OCI-LY7 (cell line): ENCODE measurements at regions of chr19 and their contacts with region 1.

Region 1: GRCh38 chr19:1269065-1269477 is at the start of gene CIRBP:
- DNase-seq: peak; percentile 99
- H3K4me3 ChIP-seq: peak within 1 kb of the TSS; percentile 82
- H3K27ac ChIP-seq: peak within 1 kb of the TSS; percentile 69
- H3K4me1 ChIP-seq: peaks cover 85% of the 10 kb centered on the region
- CTCF ChIP-seq: no peak
- total RNA-seq, gene CIRBP: 278 and 287 TPM in 2 replicates

Region 2: DNA sequence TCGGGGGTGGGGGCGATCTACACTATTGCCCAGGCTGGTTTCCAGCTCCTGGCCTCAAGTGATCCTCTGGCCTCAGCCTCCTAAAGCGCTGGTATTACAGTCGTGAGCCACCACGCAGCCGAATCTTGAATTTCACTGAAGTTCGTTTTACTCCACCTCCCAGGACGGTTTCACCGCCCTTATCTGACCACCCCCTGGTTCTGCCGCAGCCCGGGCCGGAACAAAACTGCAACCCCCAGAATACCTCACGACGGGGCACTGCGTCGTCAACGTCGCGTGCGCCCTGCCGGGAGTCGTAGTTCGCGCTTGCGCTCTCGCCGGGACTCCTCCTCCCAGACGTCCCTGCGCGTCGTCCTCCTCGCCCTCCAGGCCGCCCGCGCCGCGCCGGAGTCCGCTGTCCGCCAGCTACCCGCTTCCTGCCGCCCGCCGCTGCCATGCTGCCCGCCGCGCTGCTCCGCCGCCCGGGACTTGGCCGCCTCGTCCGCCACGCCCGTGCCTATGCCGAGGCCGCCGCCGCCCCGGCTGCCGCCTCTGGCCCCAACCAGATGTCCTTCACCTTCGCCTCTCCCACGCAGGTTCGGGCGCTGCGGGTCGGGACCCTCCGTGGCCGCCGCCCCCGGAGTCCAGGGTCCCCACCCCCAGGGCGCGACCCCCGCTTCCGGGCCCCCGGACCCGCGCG is 27.5 kb before region 1 on chr19 and contains the start of gene ATP5F1D:
- CTCF ChIA-PET with region 1: interaction called, 24 read pairs
- POLR2A ChIA-PET with region 1: interaction called, 23 read pairs
- intact Hi-C with region 1: loop called (anchors 1 kb)
- DNase-seq: peak; percentile 96
- H3K4me3 ChIP-seq: peak within 1 kb of the TSS; percentile 89
- H3K27ac ChIP-seq: peak within 1 kb of the TSS; percentile 50
- H3K4me1 ChIP-seq: peaks cover 48% of the 10 kb centered on the region
- CTCF ChIP-seq: no peak
- total RNA-seq, gene ATP5F1D: 51.8 and 82.1 TPM in 2 replicates

Region 3: GRCh38 chr19:1249298-1249989 is 19.6 kb before region 1 on chr19:
- CTCF ChIA-PET with region 1: interaction called, 24 read pairs
- POLR2A ChIA-PET with region 1: interaction called, 23 read pairs
- intact Hi-C with region 1: loop called (anchors 1 kb)
- DNase-seq: peak; percentile 96
- H3K4me3 ChIP-seq: peak overlapping the region; percentile 97
- H3K27ac ChIP-seq: peak overlapping the region; percentile 87
- H3K4me1 ChIP-seq: peaks cover 46% of the 10 kb centered on the region
- CTCF ChIP-seq: no peak

Region 4: GRCh38 chr19:1295169-1296012 is 26.3 kb after region 1 on chr19:
- CTCF ChIA-PET with region 1: no interaction called
- POLR2A ChIA-PET with region 1: no interaction called
- intact Hi-C with region 1: no loop called
- DNase-seq: peak; percentile 48
- H3K4me3 ChIP-seq: no peak overlapping the region
- H3K27ac ChIP-seq: no peak overlapping the region
- H3K4me1 ChIP-seq: peaks cover 34% of the 10 kb centered on the region
- CTCF ChIP-seq: no peak

Region 5: DNA sequence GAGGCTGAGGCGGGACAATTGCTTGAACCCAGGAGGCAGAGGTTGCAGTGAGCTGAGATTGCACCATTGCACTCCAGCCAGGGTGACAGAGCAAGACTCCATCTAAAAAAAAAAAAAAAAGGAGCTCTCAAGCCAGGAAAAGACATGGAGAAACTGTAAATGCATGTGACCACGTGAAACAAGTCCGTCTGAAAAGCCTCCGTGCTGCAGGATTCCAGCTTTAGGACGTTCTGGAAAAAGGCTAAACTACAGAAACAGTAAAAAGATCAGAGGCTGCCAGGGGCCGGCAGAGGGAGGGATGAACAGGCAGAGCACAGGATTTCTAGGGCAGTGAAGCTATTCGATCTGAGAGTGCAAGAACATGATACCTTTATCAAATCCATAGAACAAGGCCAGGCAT is 74.0 kb after region 1 on chr19:
- CTCF ChIA-PET with region 1: no interaction called
- POLR2A ChIA-PET with region 1: no interaction called
- intact Hi-C with region 1: no loop called
- DNase-seq: no peak
- H3K4me3 ChIP-seq: no peak overlapping the region
- H3K27ac ChIP-seq: no peak overlapping the region
- H3K4me1 ChIP-seq: peaks cover 19% of the 10 kb centered on the region
- CTCF ChIP-seq: no peak